ENCODE measurements at regions of chr15 and their contacts with region 1.

Region 1: GRCh38 chr15:58987489-58988005 is at the start of gene RNF111:
- DNase-seq: peak; percentile 87 to 95 (median 94)
- ATAC-seq: peak; percentile 97 to 98
- H3K4me3 ChIP-seq: peak within 1 kb of the TSS; percentile 71
- H3K27ac ChIP-seq: peak within 1 kb of the TSS; percentile 85
- H3K4me1 ChIP-seq: no peaks in the 10 kb centered on the region
- H3K27me3 ChIP-seq: no peaks in the 10 kb centered on the region
- total RNA-seq, gene RNF111: 22.6 to 29.4 (median 25.0) TPM

Region 2: GRCh38 chr15:58793862-58794261 is 193.7 kb before region 1 on chr15:
- intact Hi-C with region 1: no loop called
- DNase-seq: no peak
- ATAC-seq: peak; percentile 13 to 29
- H3K4me3 ChIP-seq: no peak overlapping the region
- H3K27ac ChIP-seq: no peak overlapping the region
- H3K4me1 ChIP-seq: peaks cover 9% of the 10 kb centered on the region
- H3K27me3 ChIP-seq: no peaks in the 10 kb centered on the region

Region 3: DNA sequence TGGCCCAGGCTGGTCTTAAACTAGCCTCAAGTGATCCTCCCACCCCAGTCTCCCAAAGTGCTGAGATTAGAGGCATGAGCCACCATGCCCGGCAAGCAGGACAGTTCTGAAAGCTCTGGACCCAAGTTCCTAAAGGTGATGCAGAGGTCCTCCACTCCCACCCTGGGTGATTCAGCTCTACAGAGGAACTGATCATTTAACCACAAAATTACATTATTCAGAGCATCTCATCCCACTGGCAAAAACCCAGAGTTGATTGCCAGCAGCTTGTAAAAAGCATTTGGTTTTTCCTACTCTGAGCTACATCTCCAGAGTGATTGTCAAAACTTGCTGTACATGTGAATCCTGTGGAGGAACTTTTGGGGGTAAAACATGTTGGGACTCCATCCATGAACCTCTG is 114.3 kb before region 1 on chr15:
- intact Hi-C with region 1: no loop called
- DNase-seq: no peak
- ATAC-seq: no peak
- H3K4me3 ChIP-seq: no peak overlapping the region
- H3K27ac ChIP-seq: no peak overlapping the region
- H3K4me1 ChIP-seq: no peaks in the 10 kb centered on the region
- H3K27me3 ChIP-seq: no peaks in the 10 kb centered on the region

Region 4: DNA sequence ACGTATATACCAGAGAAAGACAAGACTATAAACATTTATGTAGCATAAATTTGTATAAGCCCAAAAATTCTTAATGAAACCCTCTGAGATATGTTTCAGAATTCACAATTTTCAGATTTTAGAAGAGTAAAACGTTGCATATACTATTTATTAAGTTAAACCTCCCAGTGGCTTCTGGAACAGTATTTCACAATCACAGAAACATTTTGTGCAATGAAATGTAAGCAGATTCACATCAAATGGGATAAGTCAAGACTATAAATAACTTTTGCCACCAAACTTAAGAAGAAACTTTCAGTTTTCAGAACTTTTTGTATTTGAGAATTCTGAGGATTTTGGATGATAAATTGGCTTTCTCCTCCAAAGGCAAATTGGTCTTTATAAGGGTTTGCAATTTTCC is 63.2 kb before region 1 on chr15:
- intact Hi-C with region 1: no loop called
- DNase-seq: no peak
- ATAC-seq: no peak
- H3K4me3 ChIP-seq: no peak overlapping the region
- H3K27ac ChIP-seq: no peak overlapping the region
- H3K4me1 ChIP-seq: peaks cover 6% of the 10 kb centered on the region
- H3K27me3 ChIP-seq: no peaks in the 10 kb centered on the region

Region 5: DNA sequence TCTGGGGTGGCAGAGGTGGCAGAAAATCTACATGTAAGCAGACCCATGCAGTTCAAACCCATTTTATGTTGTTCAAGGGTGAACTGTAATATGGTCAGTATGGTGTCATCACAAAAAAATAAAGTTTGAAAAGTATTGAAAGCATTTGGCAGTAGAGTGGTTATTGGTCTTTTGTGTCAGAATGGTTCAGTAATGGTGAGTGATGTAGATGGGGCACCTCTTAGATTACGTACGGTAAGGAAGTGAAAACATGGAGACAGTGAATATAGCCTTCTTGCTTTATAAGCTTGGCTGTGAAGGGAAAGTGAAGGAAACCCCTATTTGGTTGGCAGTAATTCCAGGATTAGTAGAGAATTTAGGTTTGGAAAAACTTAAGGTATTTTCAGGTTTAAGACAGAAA is 100.2 kb after region 1 on chr15:
- intact Hi-C with region 1: loop called in 1 of 4 experiments (anchors 10 kb)
- DNase-seq: no peak
- ATAC-seq: no peak
- H3K4me3 ChIP-seq: no peak overlapping the region
- H3K27ac ChIP-seq: no peak overlapping the region
- H3K4me1 ChIP-seq: no peaks in the 10 kb centered on the region
- H3K27me3 ChIP-seq: no peaks in the 10 kb centered on the region

Region 6: GRCh38 chr15:59191855-59192237 is 204.3 kb after region 1 on chr15:
- intact Hi-C with region 1: no loop called
- DNase-seq: no peak
- ATAC-seq: no peak
- H3K4me3 ChIP-seq: no peak overlapping the region
- H3K27ac ChIP-seq: no peak overlapping the region
- H3K4me1 ChIP-seq: no peaks in the 10 kb centered on the region
- H3K27me3 ChIP-seq: no peaks in the 10 kb centered on the region